Activated CD4-positive, alpha-beta T cell treated with anti-CD3 and anti-CD28 coated beads for 36 hours (primary cell): ENCODE measurements at regions of chrX and their contacts with region 1.

Region 1: GRCh38 chrX:44945736-44946135 is 72.7 kb downstream of the KDM6A start:
- DNase-seq: peak; percentile 37
- ATAC-seq: no peak
- H3K4me3 Mint-ChIP-seq: no peak overlapping the region
- H3K27ac Mint-ChIP-seq: no peak overlapping the region
- H3K4me1 Mint-ChIP-seq: peaks cover 25% of the 10 kb centered on the region
- H3K27me3 Mint-ChIP-seq: no peaks in the 10 kb centered on the region

Region 2: GRCh38 chrX:44889824-44890223 is 55.9 kb before region 1 on chrX:
- CTCF ChIA-PET with region 1: no interaction called
- POLR2A ChIA-PET with region 1: interaction called, 19 read pairs
- intact Hi-C with region 1: no loop called
- DNase-seq: no peak
- ATAC-seq: no peak
- H3K4me3 Mint-ChIP-seq: no peak overlapping the region
- H3K27ac Mint-ChIP-seq: peak overlapping the region; percentile 5
- H3K4me1 Mint-ChIP-seq: peaks cover 28% of the 10 kb centered on the region
- H3K27me3 Mint-ChIP-seq: no peaks in the 10 kb centered on the region